ENCODE measurements at regions of chr19 and their contacts with region 1.

Region 1: DNA sequence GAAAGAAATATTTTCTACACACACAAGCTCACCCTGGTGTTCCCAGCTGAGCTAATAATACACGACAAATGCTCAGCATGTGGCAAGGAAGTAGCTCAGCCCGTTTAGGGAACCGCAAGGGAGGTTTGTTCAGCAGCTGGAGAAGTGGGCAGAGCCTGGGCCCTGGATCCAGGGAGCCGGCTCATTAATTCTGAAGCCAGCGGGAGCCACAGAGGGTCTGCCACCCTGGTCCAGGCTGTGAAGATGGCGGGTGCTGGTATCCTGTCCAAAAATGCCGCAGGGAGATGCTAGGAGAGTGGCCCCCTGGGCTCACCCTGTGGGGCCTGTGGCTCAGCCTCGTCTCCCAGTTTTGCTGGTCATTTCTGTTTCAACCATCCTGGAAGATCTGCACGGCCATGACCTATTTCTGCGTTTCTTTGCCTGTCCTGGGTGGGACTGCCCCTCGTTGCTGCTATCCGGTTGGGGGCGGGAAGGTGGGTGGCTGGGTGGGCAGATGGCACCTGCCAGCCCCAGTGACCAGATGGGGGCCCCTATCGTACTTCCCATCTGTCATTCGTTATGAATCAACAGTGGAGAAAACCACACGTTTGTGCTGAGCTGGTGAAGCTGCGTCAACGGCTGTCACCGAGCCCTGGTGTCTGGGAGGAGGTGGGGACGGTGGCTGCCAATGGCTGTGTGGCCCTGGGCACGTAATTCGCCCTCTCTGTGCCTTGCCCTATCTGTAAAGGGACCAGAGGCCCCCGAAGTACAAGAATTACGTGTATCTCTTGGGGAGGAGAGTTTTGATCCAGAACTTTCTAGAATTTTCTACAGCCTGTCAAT is 2.7 kb upstream of the GNA15 start:
- DNase-seq: peak; percentile 94
- H3K4me3 Mint-ChIP-seq: peak overlapping the region; percentile 68
- H3K27ac Mint-ChIP-seq: peak overlapping the region; percentile 92
- H3K4me1 Mint-ChIP-seq: peaks cover 38% of the 10 kb centered on the region
- H3K27me3 Mint-ChIP-seq: peaks cover 2% of the 10 kb centered on the region

Region 2: GRCh38 chr19:2739602-2740313 is 393.4 kb before region 1 on chr19 and contains the start of gene SLC39A3:
- intact Hi-C with region 1: no loop called
- DNase-seq: peak; percentile 100
- H3K4me3 Mint-ChIP-seq: peak within 1 kb of the TSS; percentile 97
- H3K27ac Mint-ChIP-seq: peak within 1 kb of the TSS; percentile 68
- H3K4me1 Mint-ChIP-seq: peaks cover 15% of the 10 kb centered on the region
- H3K27me3 Mint-ChIP-seq: peaks cover 8% of the 10 kb centered on the region
- total RNA-seq, gene SLC39A3: 48.8 and 52.2 TPM in 2 replicates

Region 3: DNA sequence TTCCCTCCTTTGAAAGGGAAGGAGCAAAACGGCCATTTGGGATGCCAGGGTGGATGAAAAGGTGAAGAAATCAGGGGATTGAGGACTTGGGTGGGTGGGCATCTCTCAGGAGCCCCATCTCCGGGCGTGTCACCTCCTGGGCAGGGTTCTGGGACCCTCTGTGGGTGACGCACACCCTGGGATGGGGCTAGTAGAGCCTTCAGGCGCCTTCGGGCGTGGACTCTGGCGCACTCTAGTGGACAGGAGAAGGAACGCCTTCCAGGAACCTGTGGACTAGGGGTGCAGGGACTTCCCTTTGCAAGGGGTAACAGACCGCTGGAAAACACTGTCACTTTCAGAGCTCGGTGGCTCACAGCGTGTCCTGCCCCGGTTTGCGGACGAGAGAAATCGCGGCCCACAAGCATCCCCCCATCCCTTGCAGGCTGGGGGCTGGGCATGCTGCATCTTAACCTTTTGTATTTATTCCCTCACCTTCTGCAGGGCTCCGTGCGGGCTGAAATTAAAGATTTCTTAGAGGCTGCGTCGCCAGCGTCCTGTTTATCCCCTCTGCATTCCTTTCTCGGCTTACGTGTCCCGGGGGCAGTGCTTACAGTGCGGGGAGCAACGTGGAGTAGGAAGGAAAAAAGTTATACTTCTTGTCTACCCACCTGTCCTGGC is 30.2 kb after region 1 on chr19:
- intact Hi-C with region 1: loop called (anchors 1 kb)
- DNase-seq: peak; percentile 91
- H3K4me3 Mint-ChIP-seq: no peak overlapping the region
- H3K27ac Mint-ChIP-seq: peak overlapping the region; percentile 56
- H3K4me1 Mint-ChIP-seq: peaks cover 33% of the 10 kb centered on the region
- H3K27me3 Mint-ChIP-seq: no peaks in the 10 kb centered on the region

Region 4: GRCh38 chr19:3178377-3178972 is 45.3 kb after region 1 on chr19 and contains the start of gene S1PR4:
- intact Hi-C with region 1: loop called (anchors 1 kb)
- DNase-seq: peak; percentile 91
- H3K4me3 Mint-ChIP-seq: peak within 1 kb of the TSS; percentile 100
- H3K27ac Mint-ChIP-seq: peak within 1 kb of the TSS; percentile 97
- H3K4me1 Mint-ChIP-seq: peaks cover 26% of the 10 kb centered on the region
- H3K27me3 Mint-ChIP-seq: no peaks in the 10 kb centered on the region
- total RNA-seq, gene S1PR4: 41.8 and 43.7 TPM in 2 replicates

Region 5: GRCh38 chr19:3188627-3189510 is 55.7 kb after region 1 on chr19:
- intact Hi-C with region 1: no loop called
- DNase-seq: no peak
- H3K4me3 Mint-ChIP-seq: peak overlapping the region; percentile 96
- H3K27ac Mint-ChIP-seq: peak overlapping the region; percentile 78
- H3K4me1 Mint-ChIP-seq: peaks cover 33% of the 10 kb centered on the region
- H3K27me3 Mint-ChIP-seq: no peaks in the 10 kb centered on the region

Region 6: DNA sequence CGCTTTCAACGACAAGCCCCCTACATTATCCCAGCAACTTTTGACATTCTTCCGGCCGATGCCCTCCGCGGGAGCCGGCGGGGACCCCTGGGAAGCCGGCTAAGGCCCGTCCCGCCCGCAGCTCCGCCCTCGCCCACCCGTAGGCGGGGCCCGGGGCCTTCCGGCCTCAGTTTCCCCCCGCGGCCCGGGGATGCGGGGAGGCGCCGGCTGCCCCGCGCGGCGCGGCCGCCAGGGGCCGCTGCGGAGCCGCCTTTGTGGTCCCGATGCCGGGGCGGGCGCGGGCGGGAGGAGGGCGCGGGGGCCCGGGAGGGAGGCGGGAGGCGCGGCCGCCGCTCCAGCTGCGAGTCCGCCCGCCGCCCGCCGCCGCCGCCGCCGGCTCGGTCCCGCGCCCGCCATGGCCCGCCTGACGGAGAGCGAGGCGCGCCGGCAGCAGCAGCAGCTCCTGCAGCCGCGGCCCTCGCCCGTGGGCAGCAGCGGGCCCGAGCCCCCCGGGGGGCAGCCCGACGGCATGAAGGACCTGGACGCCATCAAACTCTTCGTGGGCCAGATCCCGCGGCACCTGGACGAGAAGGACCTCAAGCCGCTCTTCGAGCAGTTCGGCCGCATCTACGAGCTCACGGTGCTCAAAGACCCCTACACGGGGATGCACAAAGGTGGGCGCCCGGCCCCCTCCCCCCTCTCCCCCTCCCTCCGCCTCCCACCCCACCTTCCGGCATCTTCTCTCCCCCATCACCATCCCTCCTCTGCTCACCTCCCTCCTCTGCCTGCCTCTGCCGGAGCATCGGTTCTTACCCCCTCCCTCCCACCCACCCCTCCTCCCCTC is 91.4 kb after region 1 on chr19 and contains the start of gene CELF5:
- intact Hi-C with region 1: no loop called
- DNase-seq: peak; percentile 85
- H3K4me3 Mint-ChIP-seq: peak within 1 kb of the TSS; percentile 19
- H3K27ac Mint-ChIP-seq: no peak within 1 kb of the TSS
- H3K4me1 Mint-ChIP-seq: no peaks in the 10 kb centered on the region
- H3K27me3 Mint-ChIP-seq: peaks cover 31% of the 10 kb centered on the region
- total RNA-seq, gene CELF5: 0.12 and 0.19 TPM in 2 replicates

Region 7: GRCh38 chr19:3275583-3276340 is 142.6 kb after region 1 on chr19:
- intact Hi-C with region 1: no loop called
- DNase-seq: peak; percentile 94
- H3K4me3 Mint-ChIP-seq: peak overlapping the region; percentile 87
- H3K27ac Mint-ChIP-seq: peak overlapping the region; percentile 84
- H3K4me1 Mint-ChIP-seq: peaks cover 10% of the 10 kb centered on the region
- H3K27me3 Mint-ChIP-seq: peaks cover 14% of the 10 kb centered on the region

Measured in activated CD4-positive, alpha-beta T cell treated with anti-CD3 and anti-CD28 coated beads, Interleukin-2, amount 10 ng/mL, durations not matched to agents 24 days and 14 days (primary cell).